Activated B cell treated with CpG ODN at 0.5 μM for 24 hours (primary cell): ENCODE measurements at regions of chr16 and their contacts with region 1.

Region 1: DNA sequence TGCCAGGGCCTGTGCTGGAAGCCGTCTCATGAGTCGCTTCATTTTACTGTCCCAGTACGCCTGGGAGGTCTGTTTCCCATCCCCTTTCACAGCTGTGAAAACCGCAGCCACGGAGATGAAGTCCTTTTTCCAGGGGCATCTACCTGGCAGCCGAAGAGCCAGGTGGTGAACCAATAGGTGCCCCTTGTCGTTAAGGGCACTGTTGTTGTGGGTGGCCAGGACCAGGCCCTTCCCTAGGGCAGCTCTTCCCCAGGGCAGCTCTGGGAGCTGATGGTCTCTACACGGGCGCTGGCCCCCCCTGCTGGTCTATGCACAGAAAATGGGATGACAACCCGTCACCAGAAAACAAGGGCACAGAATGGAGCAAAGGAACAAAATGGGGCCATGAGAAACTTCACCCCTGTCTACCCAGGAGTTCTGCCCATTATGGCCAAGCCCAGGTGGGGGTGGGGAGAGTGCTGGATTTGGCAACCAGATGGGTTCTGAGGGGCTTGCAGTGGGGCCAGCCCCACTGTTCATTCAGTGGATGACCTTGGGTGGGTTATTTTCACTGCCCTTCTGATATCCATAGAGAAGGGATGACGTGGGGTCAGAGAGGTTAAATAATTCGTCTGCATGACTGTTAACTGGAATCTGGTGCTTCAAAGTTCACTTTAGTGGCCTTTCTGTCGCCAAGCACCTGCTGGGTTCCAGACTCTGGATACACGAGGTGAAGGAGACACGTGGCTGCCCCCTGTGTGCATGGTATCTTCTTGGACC is 11.5 kb downstream of the RMI2 start:
- DNase-seq: peak; percentile 46
- ATAC-seq: peak; percentile 30
- H3K4me3 Mint-ChIP-seq: no peak overlapping the region
- H3K27ac Mint-ChIP-seq: no peak overlapping the region
- H3K4me1 Mint-ChIP-seq: peaks cover 58% of the 10 kb centered on the region
- H3K27me3 Mint-ChIP-seq: peaks cover 21% of the 10 kb centered on the region
- CTCF ChIP-seq: no peak

Region 2: GRCh38 chr16:10600533-10601443 is 756.0 kb before region 1 on chr16:
- CTCF ChIA-PET with region 1: no interaction called
- POLR2A ChIA-PET with region 1: no interaction called
- intact Hi-C with region 1: no loop called
- DNase-seq: no peak
- ATAC-seq: no peak
- H3K4me3 Mint-ChIP-seq: no peak overlapping the region
- H3K27ac Mint-ChIP-seq: no peak overlapping the region
- H3K4me1 Mint-ChIP-seq: peaks cover 31% of the 10 kb centered on the region
- H3K27me3 Mint-ChIP-seq: peaks cover 8% of the 10 kb centered on the region
- CTCF ChIP-seq: no peak

Region 3: GRCh38 chr16:10971560-10971961 is 385.2 kb before region 1 on chr16:
- CTCF ChIA-PET with region 1: interaction called, 7 read pairs
- POLR2A ChIA-PET with region 1: interaction called, 4 read pairs
- intact Hi-C with region 1: loop called (anchors 1 kb)
- DNase-seq: no peak
- ATAC-seq: peak; percentile 54
- H3K4me3 Mint-ChIP-seq: no peak overlapping the region
- H3K27ac Mint-ChIP-seq: no peak overlapping the region
- H3K4me1 Mint-ChIP-seq: peaks cover 12% of the 10 kb centered on the region
- H3K27me3 Mint-ChIP-seq: no peaks in the 10 kb centered on the region
- CTCF ChIP-seq: peak; percentile 74

Region 4: DNA sequence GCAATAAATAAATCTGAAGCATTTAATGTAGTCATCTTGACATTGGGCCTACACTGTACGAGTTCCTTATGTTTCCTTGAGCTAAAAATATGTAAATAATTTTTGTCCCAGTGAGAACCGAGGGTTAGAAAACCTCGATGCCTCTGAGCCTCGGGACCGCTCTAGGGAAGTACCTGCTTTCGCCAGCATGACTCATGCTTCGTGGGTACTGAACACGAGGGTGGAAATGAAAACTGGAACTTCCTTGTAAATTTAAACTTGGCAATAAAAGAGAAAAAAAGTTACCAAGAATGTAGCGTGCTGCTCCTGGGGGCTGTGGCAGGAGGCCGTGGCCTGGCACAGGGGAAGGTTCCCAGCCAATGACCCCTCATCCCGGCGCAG is 174.9 kb before region 1 on chr16:
- CTCF ChIA-PET with region 1: no interaction called
- POLR2A ChIA-PET with region 1: interaction called, 6 read pairs
- intact Hi-C with region 1: loop called (anchors 2 kb)
- DNase-seq: no peak
- ATAC-seq: peak; percentile 35
- H3K4me3 Mint-ChIP-seq: peak overlapping the region; percentile 64
- H3K27ac Mint-ChIP-seq: peak overlapping the region; percentile 87
- H3K4me1 Mint-ChIP-seq: peaks cover 58% of the 10 kb centered on the region
- H3K27me3 Mint-ChIP-seq: no peaks in the 10 kb centered on the region
- CTCF ChIP-seq: no peak

Region 5: GRCh38 chr16:11297492-11298142 is 59.1 kb before region 1 on chr16:
- CTCF ChIA-PET with region 1: interaction called, 20 read pairs
- POLR2A ChIA-PET with region 1: interaction called, 46 read pairs
- intact Hi-C with region 1: loop called (anchors 1 kb)
- DNase-seq: peak; percentile 85
- ATAC-seq: peak; percentile 97
- H3K4me3 Mint-ChIP-seq: peak overlapping the region; percentile 73
- H3K27ac Mint-ChIP-seq: peak overlapping the region; percentile 85
- H3K4me1 Mint-ChIP-seq: peaks cover 72% of the 10 kb centered on the region
- H3K27me3 Mint-ChIP-seq: no peaks in the 10 kb centered on the region
- CTCF ChIP-seq: no peak

Region 6: DNA sequence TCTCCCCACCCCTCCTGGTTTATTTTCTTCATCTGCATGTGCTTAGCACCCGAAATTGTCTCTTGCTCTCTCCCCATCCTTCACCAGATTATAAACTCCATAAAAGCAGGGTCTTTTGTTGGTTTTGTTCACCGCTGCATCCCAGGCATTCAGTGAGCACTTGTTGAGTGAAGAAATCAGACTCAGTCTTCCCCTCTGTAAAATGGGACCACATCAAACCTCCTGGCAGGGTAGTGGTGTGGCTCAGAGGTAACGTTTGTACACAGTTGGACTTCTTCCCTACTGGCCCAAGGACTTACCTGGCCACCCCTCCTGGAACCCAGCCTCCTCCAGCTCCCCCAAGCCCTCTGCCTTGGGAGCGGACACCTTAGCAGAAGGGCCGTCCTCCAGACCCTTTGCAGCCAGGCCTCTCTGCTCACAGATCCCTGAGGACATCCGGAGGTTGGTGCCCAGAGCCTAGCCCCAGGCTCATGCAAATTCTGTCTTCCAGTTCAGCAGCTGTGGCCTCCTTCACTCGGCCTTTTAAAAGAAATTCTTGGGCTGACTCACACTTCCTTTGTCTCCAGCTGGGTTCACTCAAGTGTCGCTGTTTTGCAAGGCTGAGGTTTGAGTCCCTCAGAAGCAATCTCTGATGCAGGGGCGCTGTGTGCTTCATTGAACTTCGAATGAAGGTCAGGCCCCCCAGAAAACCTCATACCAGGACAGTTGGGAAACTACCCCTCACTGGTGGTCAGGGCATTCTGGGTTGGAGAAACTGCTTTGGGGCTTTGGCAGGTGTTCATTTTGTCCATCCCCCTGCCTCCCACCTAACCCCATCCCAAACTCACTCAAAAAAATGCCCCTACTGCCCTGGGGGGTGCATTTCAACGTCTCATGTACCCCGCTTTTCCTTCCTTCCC is 28.3 kb before region 1 on chr16:
- CTCF ChIA-PET with region 1: interaction called, 20 read pairs
- POLR2A ChIA-PET with region 1: interaction called, 62 read pairs
- intact Hi-C with region 1: loop called (anchors 1 kb)
- DNase-seq: peak; percentile 66
- ATAC-seq: peak; percentile 65
- H3K4me3 Mint-ChIP-seq: peak overlapping the region; percentile 80
- H3K27ac Mint-ChIP-seq: peak overlapping the region; percentile 94
- H3K4me1 Mint-ChIP-seq: peaks cover 72% of the 10 kb centered on the region
- H3K27me3 Mint-ChIP-seq: no peaks in the 10 kb centered on the region
- CTCF ChIP-seq: no peak

Region 7: GRCh38 chr16:11370084-11370931 is 13.6 kb after region 1 on chr16:
- CTCF ChIA-PET with region 1: interaction called, 5 read pairs
- POLR2A ChIA-PET with region 1: interaction called, 16 read pairs
- intact Hi-C with region 1: loop called (anchors 2 kb)
- DNase-seq: peak; percentile 53
- ATAC-seq: peak; percentile 96
- H3K4me3 Mint-ChIP-seq: peak overlapping the region; percentile 69
- H3K27ac Mint-ChIP-seq: peak overlapping the region; percentile 80
- H3K4me1 Mint-ChIP-seq: peaks cover 40% of the 10 kb centered on the region
- H3K27me3 Mint-ChIP-seq: no peaks in the 10 kb centered on the region
- CTCF ChIP-seq: no peak

Region 8: GRCh38 chr16:11423315-11424117 is 66.8 kb after region 1 on chr16:
- CTCF ChIA-PET with region 1: no interaction called
- POLR2A ChIA-PET with region 1: no interaction called
- intact Hi-C with region 1: no loop called
- DNase-seq: no peak
- ATAC-seq: peak; percentile 90
- H3K4me3 Mint-ChIP-seq: no peak overlapping the region
- H3K27ac Mint-ChIP-seq: no peak overlapping the region
- H3K4me1 Mint-ChIP-seq: peaks cover 9% of the 10 kb centered on the region
- H3K27me3 Mint-ChIP-seq: no peaks in the 10 kb centered on the region
- CTCF ChIP-seq: no peak

Region 9: DNA sequence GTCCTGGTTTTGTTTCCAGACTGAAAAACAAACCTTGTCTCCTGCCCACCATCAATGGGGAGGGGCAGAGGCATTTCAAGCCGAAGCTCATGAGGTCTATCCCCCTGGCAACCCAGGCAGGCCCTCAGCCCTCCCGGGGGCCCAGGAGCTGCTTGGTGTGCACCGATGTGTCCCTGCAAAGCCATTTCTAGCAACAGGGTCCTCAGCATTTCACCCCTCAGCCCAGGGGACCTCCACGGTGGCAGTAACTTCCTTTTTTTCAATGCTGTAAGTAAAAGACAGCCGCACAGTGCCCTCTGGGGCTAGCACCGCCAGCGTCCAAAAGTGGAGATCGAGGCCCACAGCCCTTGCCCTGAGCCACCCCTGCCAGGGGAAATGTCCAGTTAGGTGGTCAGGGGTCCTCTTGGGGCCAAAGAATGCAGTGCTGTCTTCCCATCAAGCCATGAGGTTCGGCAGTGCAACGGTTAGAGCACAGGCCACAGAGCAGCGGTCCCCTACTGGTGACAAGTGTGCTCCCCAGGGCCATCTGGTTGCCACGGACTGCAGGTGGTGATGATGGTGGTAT is 150.1 kb after region 1 on chr16:
- CTCF ChIA-PET with region 1: no interaction called
- POLR2A ChIA-PET with region 1: no interaction called
- intact Hi-C with region 1: no loop called
- DNase-seq: peak; percentile 48
- ATAC-seq: peak; percentile 87
- H3K4me3 Mint-ChIP-seq: peak overlapping the region; percentile 76
- H3K27ac Mint-ChIP-seq: peak overlapping the region; percentile 74
- H3K4me1 Mint-ChIP-seq: peaks cover 13% of the 10 kb centered on the region
- H3K27me3 Mint-ChIP-seq: no peaks in the 10 kb centered on the region
- CTCF ChIP-seq: no peak